Gastrocnemius medialis (tissue), 4 donors: ENCODE measurements at regions of chr5 and their contacts with region 1.

Region 1: DNA sequence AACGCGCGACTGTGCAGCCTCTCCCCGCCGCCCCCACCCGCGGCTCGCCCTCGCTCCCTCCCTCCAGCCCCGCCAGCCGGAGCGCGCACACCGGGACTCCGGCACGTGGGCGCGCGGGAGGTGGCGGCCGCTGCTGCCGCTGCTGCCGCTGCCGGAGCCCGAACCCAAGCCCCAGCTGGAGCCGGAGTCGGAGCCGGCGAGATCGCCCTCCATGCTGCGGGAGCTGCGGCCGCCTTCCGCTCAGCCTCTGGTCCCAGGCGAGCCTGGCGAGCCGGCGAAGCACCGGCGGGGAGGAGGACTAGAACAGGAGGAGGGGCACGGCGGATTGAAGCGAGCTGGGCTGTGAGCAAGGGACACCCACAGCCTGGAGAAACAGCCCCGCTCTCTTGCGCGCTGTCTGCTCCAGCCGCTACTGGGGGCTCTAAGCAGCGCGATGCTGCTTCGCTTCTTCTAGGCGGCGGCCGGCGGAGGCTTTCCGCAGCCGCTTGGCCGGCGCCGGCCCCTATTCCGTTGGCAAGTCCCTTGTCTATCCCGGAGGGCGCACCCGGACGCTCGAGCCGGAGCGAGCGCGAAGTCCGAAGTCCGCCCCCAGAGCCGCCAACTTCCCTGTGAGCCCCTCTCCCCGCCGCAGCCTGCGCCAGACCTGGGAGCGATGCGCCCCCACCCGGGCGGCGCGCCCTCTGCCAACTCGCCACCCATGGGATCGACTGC is 598.7 kb upstream of the SGCD start:
- DNase-seq: peak in 1 of 2 donors; percentile 38
- ATAC-seq: peak; percentile 32 to 40
- H3K4me3 ChIP-seq: peak overlapping the region; percentile 59 to 79 (median 63)
- H3K27ac ChIP-seq: peak overlapping the region; percentile 56 to 77 (median 69)
- H3K4me1 ChIP-seq: peaks cover 24 to 39% of the 10 kb centered on the region in 2 donors
- H3K27me3 ChIP-seq: peaks cover 0 to 11% (median 0%) of the 10 kb centered on the region in 3 donors
- CTCF ChIP-seq: no peak
- POLR2A ChIP-seq: no peak

Region 2: DNA sequence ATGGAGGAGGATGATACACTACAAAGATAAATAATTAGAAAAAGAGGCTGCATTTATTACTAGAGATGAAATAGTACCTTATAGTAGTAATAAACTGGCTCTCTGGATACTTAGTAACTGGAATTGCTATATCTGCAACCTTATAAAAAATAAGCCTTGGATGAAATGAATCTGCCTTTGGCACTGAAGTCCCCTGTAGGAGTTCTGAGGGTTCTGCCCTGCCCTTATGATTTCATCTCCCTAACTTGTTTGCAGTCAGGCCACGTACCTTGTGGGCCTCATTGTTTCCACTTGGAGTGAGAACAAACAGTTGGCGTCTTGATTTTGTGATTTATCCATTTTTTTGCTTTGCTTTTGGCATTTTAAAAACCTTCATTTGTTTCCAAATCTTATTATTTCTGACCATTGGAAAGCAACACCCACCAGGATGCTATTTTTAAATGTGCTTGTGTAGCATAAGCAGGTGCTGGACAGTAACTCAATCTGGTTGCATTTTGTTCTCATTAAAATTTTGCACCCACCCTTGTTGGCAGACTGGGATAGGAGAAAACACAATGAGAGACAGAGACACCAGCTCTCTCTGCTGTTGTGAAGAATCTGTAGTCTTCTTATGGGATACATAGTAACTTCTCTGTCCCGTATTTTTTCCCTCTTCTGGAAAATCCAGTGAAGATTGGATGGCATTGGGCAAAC is 79.7 kb after region 1 on chr5:
- in situ Hi-C with region 1: no loop called
- intact Hi-C with region 1: loop called (anchors 5 kb)
- DNase-seq: no peak
- ATAC-seq: peak; percentile 73 to 83
- H3K4me3 ChIP-seq: peak overlapping the region in 2 of 4 donors; percentile 17 to 22
- H3K27ac ChIP-seq: peak overlapping the region; percentile 61 to 78 (median 68)
- H3K4me1 ChIP-seq: peaks cover 12 to 30% of the 10 kb centered on the region in 2 donors
- H3K27me3 ChIP-seq: no peaks in the 10 kb centered on the region
- CTCF ChIP-seq: no peak
- POLR2A ChIP-seq: no peak

Region 3: GRCh38 chr5:156295431-156295830 is 567.1 kb after region 1 on chr5:
- in situ Hi-C with region 1: no loop called
- intact Hi-C with region 1: no loop called
- DNase-seq: no peak
- ATAC-seq: no peak
- H3K4me3 ChIP-seq: no peak overlapping the region
- H3K27ac ChIP-seq: no peak overlapping the region
- H3K4me1 ChIP-seq: no peaks in the 10 kb centered on the region
- H3K27me3 ChIP-seq: no peaks in the 10 kb centered on the region
- CTCF ChIP-seq: no peak
- POLR2A ChIP-seq: no peak